ENCODE measurements at regions of chr12 and their contacts with region 1.

Region 1: DNA sequence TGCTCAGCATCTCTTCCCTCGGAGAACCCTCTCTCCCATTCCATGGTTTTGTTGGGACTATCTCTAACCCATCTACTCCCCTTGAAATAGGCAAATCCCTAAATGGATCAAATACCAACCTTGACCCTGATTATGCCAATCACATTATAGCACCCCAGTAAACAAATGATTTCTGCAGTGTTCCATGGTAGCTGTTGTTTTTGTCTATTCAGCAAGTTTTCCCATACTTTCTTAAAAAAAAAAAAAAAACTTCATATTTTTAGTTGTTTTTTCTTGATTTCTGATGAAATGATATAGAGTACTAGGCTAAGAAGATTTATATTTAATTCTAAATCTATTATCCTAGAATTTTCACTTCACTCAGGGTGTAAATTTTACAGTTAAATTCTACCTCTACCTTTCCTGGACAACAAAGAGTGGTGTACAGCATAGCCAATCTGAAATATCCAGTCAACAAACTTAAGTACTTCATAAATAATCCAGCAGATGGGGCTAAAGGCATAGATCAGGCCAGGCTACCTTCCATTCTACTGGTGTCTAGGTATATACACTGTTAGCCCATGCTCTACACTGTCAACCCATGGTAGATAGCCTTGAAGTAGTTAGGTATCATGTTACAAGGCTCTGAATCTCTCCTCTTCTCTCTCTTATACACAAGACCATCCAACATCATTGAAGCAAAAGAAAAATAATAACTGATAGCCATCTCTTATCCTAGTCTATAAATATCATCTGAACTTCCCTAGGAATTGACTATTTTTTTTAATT is 82.2 kb downstream of the PLEKHG7 start:
- DNase-seq: peak; percentile 75
- ATAC-seq: peak; percentile 98
- H3K4me3 ChIP-seq: no peak overlapping the region
- H3K4me3 Mint-ChIP-seq: no peak overlapping the region
- H3K27ac ChIP-seq: no peak overlapping the region
- H3K27ac Mint-ChIP-seq: no peak overlapping the region
- H3K4me1 ChIP-seq: no peaks in the 10 kb centered on the region
- H3K4me1 Mint-ChIP-seq: no peaks in the 10 kb centered on the region
- H3K27me3 ChIP-seq: no peaks in the 10 kb centered on the region
- H3K27me3 Mint-ChIP-seq: no peaks in the 10 kb centered on the region
- CTCF ChIP-seq: peak; percentile 81

Region 2: GRCh38 chr12:91361864-91362263 is 1423.1 kb before region 1 on chr12:
- CTCF ChIA-PET with region 1: no interaction called
- POLR2A ChIA-PET with region 1: no interaction called
- intact Hi-C with region 1: loop called (anchors 10 kb)
- DNase-seq: peak; percentile 56
- ATAC-seq: no peak
- H3K4me3 ChIP-seq: no peak overlapping the region
- H3K4me3 Mint-ChIP-seq: no peak overlapping the region
- H3K27ac ChIP-seq: no peak overlapping the region
- H3K27ac Mint-ChIP-seq: no peak overlapping the region
- H3K4me1 ChIP-seq: no peaks in the 10 kb centered on the region
- H3K4me1 Mint-ChIP-seq: peaks cover 7% of the 10 kb centered on the region
- H3K27me3 ChIP-seq: no peaks in the 10 kb centered on the region
- H3K27me3 Mint-ChIP-seq: peaks cover 10% of the 10 kb centered on the region
- CTCF ChIP-seq: peak; percentile 75

Region 3: GRCh38 chr12:92898755-92899154 is 113.8 kb after region 1 on chr12:
- CTCF ChIA-PET with region 1: no interaction called
- POLR2A ChIA-PET with region 1: no interaction called
- intact Hi-C with region 1: no loop called
- DNase-seq: no peak
- ATAC-seq: no peak
- H3K4me3 ChIP-seq: no peak overlapping the region
- H3K4me3 Mint-ChIP-seq: no peak overlapping the region
- H3K27ac ChIP-seq: no peak overlapping the region
- H3K27ac Mint-ChIP-seq: no peak overlapping the region
- H3K4me1 ChIP-seq: no peaks in the 10 kb centered on the region
- H3K4me1 Mint-ChIP-seq: peaks cover 5% of the 10 kb centered on the region
- H3K27me3 ChIP-seq: no peaks in the 10 kb centered on the region
- H3K27me3 Mint-ChIP-seq: no peaks in the 10 kb centered on the region
- CTCF ChIP-seq: no peak

Region 4: DNA sequence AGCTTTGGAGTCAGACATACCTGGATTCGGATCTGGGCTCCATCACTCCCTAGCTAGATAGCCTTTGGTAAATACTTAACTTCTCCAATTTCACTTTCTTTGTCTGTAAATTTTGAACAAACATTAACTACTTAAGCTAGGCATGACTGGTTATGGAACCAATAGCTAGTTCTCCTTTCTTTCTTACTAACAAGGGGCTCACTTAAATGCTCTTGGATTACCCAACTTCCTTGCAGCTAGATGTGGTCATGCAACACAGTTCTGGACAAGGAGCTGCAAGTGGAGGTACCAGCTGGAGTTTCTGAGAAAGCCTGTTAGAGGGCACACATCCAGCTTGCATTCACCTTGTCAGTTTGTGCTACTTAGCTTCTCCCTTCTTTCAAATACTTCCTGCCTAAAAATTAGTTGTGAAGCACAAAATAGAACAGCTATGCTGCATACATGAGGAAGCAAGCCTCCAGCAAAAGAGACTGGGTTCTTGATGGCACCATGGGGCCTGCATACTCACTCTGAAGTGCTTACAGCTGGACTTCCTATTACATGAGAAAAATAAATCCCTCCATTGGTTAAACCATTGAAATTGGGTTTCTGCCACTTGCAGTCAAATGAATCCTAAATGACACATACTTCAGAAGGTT is 354.2 kb after region 1 on chr12:
- CTCF ChIA-PET with region 1: no interaction called
- POLR2A ChIA-PET with region 1: no interaction called
- intact Hi-C with region 1: no loop called
- DNase-seq: peak; percentile 69
- ATAC-seq: peak; percentile 74
- H3K4me3 ChIP-seq: peak overlapping the region in 1 of 5 experiments; percentile 41
- H3K4me3 Mint-ChIP-seq: peak overlapping the region; percentile 76
- H3K27ac ChIP-seq: peak overlapping the region; percentile 65 to 87
- H3K27ac Mint-ChIP-seq: peak overlapping the region; percentile 94
- H3K4me1 ChIP-seq: peaks cover 57 to 62% of the 10 kb centered on the region in 2 donors
- H3K4me1 Mint-ChIP-seq: peaks cover 58% of the 10 kb centered on the region
- H3K27me3 ChIP-seq: no peaks in the 10 kb centered on the region
- H3K27me3 Mint-ChIP-seq: no peaks in the 10 kb centered on the region
- CTCF ChIP-seq: no peak

Region 5: GRCh38 chr12:93484315-93484981 is 699.5 kb after region 1 on chr12:
- CTCF ChIA-PET with region 1: no interaction called
- POLR2A ChIA-PET with region 1: no interaction called
- intact Hi-C with region 1: loop called (anchors 10 kb)
- DNase-seq: no peak
- ATAC-seq: no peak
- H3K4me3 ChIP-seq: no peak overlapping the region
- H3K4me3 Mint-ChIP-seq: no peak overlapping the region
- H3K27ac ChIP-seq: no peak overlapping the region
- H3K27ac Mint-ChIP-seq: no peak overlapping the region
- H3K4me1 ChIP-seq: no peaks in the 10 kb centered on the region
- H3K4me1 Mint-ChIP-seq: no peaks in the 10 kb centered on the region
- H3K27me3 ChIP-seq: no peaks in the 10 kb centered on the region
- H3K27me3 Mint-ChIP-seq: no peaks in the 10 kb centered on the region
- CTCF ChIP-seq: no peak